Activated T-helper 2 cell treated with anti-CD3 and anti-CD28 coated beads, Interferon-gamma antibody, Interleukin-2, Interleukin-4, amounts not matched to agents 10 μg/mL and 5 μg/mL and 100 μg/mL, durations not matched to agents 14 hours and 24 hours and 36 hours (primary cell): ENCODE measurements at regions of chr15 and their contacts with region 1.

Region 1: DNA sequence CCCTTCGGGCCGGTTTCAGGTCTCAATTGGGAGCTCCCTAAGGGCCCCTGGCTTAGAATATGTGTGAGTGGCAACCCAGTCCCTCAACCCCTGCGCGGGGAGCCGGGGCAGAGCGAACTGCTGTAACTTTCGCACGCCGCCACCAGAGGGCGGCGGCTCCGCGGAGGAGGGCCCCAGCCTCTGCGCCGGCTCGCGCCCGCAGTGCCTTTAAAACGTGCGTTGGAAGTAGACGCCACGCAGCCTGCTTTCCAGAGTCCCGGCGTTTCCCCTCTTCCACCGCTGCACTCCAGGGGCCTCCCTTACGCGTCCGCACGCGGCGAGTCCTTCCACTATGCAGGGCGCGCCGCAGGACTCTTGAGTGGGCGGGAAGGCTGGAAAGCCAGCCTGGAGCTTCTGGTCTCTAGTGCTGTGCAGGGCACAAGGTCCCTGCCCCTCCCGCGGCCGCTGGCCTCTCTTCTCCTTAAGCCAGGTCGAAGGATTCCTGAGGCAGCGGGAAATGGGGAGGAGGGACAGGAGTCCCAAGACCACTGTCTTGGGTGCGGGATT is 23.7 kb upstream of the RNU6-1 start:
- DNase-seq: peak; percentile 56
- H3K4me3 Mint-ChIP-seq: peak overlapping the region; percentile 39
- H3K27ac Mint-ChIP-seq: no peak overlapping the region
- H3K4me1 Mint-ChIP-seq: peaks cover 4% of the 10 kb centered on the region
- H3K27me3 Mint-ChIP-seq: peaks cover 15% of the 10 kb centered on the region

Region 2: GRCh38 chr15:67685008-67685599 is 178.4 kb before region 1 on chr15:
- intact Hi-C with region 1: no loop called
- DNase-seq: no peak
- H3K4me3 Mint-ChIP-seq: no peak overlapping the region
- H3K27ac Mint-ChIP-seq: no peak overlapping the region
- H3K4me1 Mint-ChIP-seq: peaks cover 2% of the 10 kb centered on the region
- H3K27me3 Mint-ChIP-seq: no peaks in the 10 kb centered on the region

Region 3: DNA sequence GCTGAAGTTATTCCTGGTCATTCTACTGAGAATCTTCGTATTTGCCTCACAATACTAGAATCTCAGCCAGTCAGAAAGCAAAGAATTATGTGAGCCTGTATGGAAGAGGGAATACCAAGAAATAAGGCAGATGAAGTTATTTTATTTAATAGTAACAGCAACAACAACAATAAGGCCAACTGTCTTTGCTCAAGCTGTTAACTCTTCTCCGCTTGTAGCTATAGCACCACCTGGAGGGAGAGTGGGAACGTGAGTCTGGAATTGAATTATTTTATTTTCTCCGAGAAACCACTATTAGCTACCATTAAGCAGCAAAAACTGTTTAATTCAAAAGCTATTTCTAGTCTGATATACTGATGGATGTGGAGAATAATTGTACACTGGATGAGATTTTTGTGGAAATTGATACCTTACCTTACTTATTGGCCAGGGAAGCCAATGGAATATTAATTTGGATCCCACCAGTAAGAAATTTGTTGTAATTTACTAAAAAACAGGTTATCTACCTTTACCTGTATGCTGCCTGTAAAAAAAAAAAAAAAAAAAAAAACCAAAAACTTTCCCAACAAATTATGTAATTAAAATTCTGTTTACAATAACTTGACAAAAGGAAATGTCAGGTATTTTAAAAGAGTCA is 291.5 kb after region 1 on chr15:
- intact Hi-C with region 1: loop called (anchors 2 kb)
- DNase-seq: no peak
- H3K4me3 Mint-ChIP-seq: no peak overlapping the region
- H3K27ac Mint-ChIP-seq: no peak overlapping the region
- H3K4me1 Mint-ChIP-seq: no peaks in the 10 kb centered on the region
- H3K27me3 Mint-ChIP-seq: no peaks in the 10 kb centered on the region

Region 4: DNA sequence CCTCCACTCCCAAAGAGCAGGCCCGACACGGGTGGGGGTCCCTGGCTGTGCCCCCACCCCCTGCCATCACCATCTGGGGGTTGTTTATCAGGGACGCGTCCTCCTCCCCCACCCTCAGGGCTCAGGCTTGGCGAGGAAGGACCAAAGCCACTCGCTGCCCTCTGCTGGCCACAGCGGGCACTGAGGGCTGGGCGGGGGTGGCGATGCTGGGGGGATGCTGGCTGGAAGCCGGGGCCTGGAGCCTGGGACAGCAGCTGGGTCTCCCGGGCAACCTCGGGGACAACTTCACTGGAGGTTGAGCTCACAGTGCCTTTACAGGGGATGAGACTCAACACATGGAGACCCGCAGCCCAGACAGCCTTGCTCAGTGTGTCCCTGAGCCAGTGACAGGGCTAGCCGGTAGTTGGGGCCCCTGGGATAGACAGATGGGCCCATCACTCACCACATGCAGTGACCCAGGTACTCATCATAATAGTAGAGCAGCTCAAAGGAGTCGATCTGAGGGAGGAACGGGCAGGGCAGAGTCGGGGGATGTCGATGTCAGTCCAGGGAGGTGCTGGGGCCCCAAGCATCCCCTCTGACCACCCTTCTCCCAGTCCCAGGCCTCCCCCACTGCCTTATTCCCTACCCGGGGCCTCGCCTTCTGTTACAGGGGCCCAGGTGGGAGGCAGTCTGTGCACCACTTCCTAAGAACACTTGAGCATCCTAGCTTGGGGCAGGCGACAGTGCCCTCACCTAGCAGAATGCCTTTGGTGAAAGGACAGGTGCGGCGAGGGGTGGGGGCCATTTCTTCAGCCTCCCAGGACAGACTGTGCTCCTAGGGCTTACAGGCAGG is 347.5 kb after region 1 on chr15:
- intact Hi-C with region 1: loop called (anchors 2 kb)
- DNase-seq: peak; percentile 36
- H3K4me3 Mint-ChIP-seq: no peak overlapping the region
- H3K27ac Mint-ChIP-seq: peak overlapping the region; percentile 63
- H3K4me1 Mint-ChIP-seq: peaks cover 25% of the 10 kb centered on the region
- H3K27me3 Mint-ChIP-seq: no peaks in the 10 kb centered on the region